ENCODE measurements at regions of chr2 and their contacts with region 1.

Region 1: GRCh38 chr2:120343433-120344105 is 2.4 kb upstream of the INHBB start:
- DNase-seq: peak; percentile 68
- ATAC-seq: peak; percentile 84
- H3K4me3 ChIP-seq: no peak overlapping the region
- H3K27ac ChIP-seq: no peak overlapping the region
- H3K4me1 ChIP-seq: peaks cover 6% of the 10 kb centered on the region; the same call in 1 of the 2 replicates
- H3K27me3 ChIP-seq: peaks cover 90% of the 10 kb centered on the region
- CTCF ChIP-seq: peak; percentile 92
- POLR2A ChIP-seq: no peak
- RAD21 ChIP-seq: peak; percentile 97

Region 2: DNA sequence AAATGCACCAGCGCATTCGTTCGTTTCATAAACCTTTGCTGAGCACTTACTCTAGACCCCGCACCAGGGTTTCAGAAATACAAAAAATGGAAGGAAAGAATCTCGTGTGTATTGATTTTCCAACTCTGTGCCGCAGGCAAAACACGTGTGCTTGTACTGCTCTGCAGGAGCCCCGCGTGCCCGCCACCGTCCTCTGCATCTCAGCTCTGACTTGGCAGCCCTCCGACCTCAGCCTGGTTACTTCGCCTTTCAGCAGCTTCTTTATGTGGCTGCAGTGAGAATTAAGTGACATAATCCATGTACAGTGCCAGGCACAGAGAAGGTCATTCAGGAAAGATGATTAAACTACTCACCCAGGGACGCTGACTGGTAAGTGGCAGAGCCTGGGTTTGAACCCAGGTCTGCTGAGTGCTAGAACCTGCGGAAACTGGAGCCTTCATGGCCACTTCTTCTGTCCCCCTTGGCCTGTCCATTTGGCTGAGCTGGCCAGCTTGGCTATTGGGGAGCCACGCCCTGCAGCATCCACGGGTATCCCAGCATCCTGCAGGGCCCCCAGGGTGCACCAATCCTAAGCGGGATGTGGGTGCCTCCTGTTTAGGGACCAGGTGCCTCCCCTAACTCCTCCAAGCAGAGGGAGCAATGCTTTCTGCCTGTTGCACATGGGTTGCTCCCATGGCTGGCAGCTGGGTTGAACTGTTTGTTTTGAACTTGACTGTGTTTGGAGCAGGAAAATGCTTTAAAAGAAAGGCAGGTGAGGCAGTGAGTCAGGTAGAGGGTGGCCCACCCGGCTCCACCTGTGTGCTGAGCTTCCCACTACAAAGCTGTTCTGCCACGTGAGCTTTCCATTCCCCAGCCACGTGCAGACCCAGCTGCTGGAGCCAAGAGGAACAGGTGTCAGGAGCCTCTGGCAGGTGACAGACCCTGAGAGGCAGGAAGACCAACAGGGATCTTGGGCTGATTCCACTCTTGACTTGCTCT is 36.6 kb after region 1 on chr2:
- CTCF ChIA-PET with region 1: no interaction called
- POLR2A ChIA-PET with region 1: no interaction called
- dilution Hi-C with region 1: no loop called
- in situ Hi-C with region 1: no loop called
- intact Hi-C with region 1: no loop called
- DNase-seq: no peak
- ATAC-seq: no peak
- H3K4me3 ChIP-seq: no peak overlapping the region
- H3K27ac ChIP-seq: no peak overlapping the region
- H3K4me1 ChIP-seq: no peaks in the 10 kb centered on the region
- H3K27me3 ChIP-seq: peaks cover 98% of the 10 kb centered on the region
- CTCF ChIP-seq: no peak
- POLR2A ChIP-seq: no peak
- RAD21 ChIP-seq: no peak

Region 3: GRCh38 chr2:120552800-120553481 is 209.4 kb after region 1 on chr2:
- CTCF ChIA-PET with region 1: no interaction called
- POLR2A ChIA-PET with region 1: no interaction called
- dilution Hi-C with region 1: no loop called
- in situ Hi-C with region 1: no loop called
- intact Hi-C with region 1: loop called (anchors 1 kb)
- DNase-seq: peak; percentile 23
- ATAC-seq: peak; percentile 64
- H3K4me3 ChIP-seq: no peak overlapping the region
- H3K27ac ChIP-seq: no peak overlapping the region
- H3K4me1 ChIP-seq: peaks cover 16% of the 10 kb centered on the region
- H3K27me3 ChIP-seq: peaks cover 6% of the 10 kb centered on the region; the same call in 1 of the 2 replicates
- CTCF ChIP-seq: peak; percentile 39
- POLR2A ChIP-seq: no peak
- RAD21 ChIP-seq: peak; percentile 43

Region 4: GRCh38 chr2:120820263-120820952 is 476.8 kb after region 1 on chr2:
- CTCF ChIA-PET with region 1: no interaction called
- POLR2A ChIA-PET with region 1: no interaction called
- dilution Hi-C with region 1: no loop called
- in situ Hi-C with region 1: loop called (anchors 25 kb)
- intact Hi-C with region 1: no loop called
- DNase-seq: peak; percentile 90
- ATAC-seq: peak; percentile 65
- H3K4me3 ChIP-seq: peak overlapping the region; percentile 27
- H3K27ac ChIP-seq: peak overlapping the region; percentile 89
- H3K4me1 ChIP-seq: peaks cover 40% of the 10 kb centered on the region
- H3K27me3 ChIP-seq: no peaks in the 10 kb centered on the region
- CTCF ChIP-seq: no peak
- POLR2A ChIP-seq: peak; percentile 22; the same call in 1 of the 2 replicates
- RAD21 ChIP-seq: no peak